Caco-2 (cell line): ENCODE measurements at regions of chr3 and their contacts with region 1.

Region 1: DNA sequence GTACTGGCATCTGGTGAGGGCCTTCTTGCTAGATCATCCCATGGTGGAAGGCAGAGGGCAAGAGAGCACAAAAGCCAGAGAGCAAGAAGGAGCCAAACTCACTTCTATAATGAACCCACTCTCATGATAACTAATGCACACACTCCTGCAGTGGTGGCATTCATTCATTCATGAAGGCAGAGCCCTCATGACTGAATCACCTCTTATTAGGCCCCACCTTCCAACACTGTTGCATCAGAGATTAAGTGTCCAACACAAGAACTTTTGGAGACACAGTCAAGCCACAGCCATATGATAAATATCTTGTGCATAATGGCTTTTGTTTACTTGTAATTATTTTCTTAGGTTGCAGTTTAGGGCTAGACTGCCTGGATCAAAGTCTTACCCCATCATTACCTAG is 182.7 kb downstream of the TIGIT start:
- DNase-seq: no peak
- H3K4me3 ChIP-seq: no peak overlapping the region
- H3K4me3 Mint-ChIP-seq: no peak overlapping the region
- H3K27ac Mint-ChIP-seq: no peak overlapping the region
- H3K4me1 ChIP-seq: peaks cover 22% of the 10 kb centered on the region
- H3K4me1 Mint-ChIP-seq: peaks cover 23% of the 10 kb centered on the region
- H3K27me3 ChIP-seq: no peaks in the 10 kb centered on the region
- H3K27me3 Mint-ChIP-seq: no peaks in the 10 kb centered on the region
- CTCF ChIP-seq: no peak

Region 2: GRCh38 chr3:114452937-114453896 is 23.3 kb before region 1 on chr3:
- CTCF ChIA-PET with region 1: interaction called, 15 read pairs
- POLR2A ChIA-PET with region 1: no interaction called
- intact Hi-C with region 1: no loop called
- DNase-seq: no peak
- H3K4me3 ChIP-seq: no peak overlapping the region
- H3K4me3 Mint-ChIP-seq: no peak overlapping the region
- H3K27ac Mint-ChIP-seq: no peak overlapping the region
- H3K4me1 ChIP-seq: peaks cover 4% of the 10 kb centered on the region; the same call in 1 of the 2 replicates
- H3K4me1 Mint-ChIP-seq: peaks cover 7% of the 10 kb centered on the region
- H3K27me3 ChIP-seq: no peaks in the 10 kb centered on the region
- H3K27me3 Mint-ChIP-seq: no peaks in the 10 kb centered on the region
- CTCF ChIP-seq: no peak